ENCODE measurements at regions of chr5 and their contacts with region 1.

Region 1: DNA sequence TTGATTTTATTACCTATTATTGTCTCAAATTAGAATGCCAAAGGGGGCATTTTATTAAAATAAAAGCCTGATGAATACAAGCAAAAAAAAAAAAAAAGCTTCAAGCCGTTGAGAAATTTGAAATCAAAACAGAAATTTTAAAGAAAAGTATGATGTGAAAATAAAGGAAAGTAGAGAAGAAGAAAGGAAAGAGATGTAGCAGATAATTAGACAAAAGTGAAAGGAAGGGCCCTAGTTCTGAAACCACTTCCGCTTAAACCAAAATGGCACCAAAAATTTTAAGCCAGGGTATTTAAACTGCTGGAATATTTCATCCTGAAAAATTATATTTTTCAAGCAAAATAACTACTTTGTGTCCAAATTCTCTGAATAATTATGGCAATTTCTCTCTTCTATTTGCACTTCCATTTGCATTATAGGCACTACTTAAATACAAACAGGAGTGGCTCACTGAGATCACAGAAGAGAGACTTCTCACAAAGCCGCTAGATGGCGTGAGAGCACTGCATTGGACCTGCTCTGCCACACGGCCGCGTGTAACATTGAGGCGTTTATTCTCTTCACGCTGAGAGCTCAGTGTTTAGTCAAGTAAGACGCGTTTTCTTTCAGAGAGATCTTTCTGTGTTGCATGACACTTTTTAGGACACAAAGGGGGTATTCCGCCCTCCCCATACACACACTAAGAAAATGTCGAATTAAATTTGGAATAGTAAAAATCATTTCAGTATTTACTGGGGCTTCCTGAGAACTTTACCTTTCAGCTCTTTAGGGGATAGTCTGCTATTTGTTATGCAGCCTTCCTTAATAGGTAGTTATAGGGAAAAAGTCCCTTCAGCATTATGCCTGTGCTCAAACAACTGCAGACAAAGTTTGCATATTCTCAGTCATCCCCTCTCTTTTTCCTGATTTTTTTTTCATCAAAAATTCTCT is 368.4 kb upstream of the CCNH start:
- DNase-seq: peak; percentile 60
- H3K27ac ChIP-seq: no peak overlapping the region
- CTCF ChIP-seq: peak; percentile 98

Region 2: GRCh38 chr5:87936667-87937066 is 155.6 kb after region 1 on chr5:
- CTCF ChIA-PET with region 1: no interaction called
- POLR2A ChIA-PET with region 1: no interaction called
- DNase-seq: no peak
- H3K27ac ChIP-seq: no peak overlapping the region
- CTCF ChIP-seq: no peak

Region 3: GRCh38 chr5:88690409-88691229 is 909.5 kb after region 1 on chr5:
- CTCF ChIA-PET with region 1: interaction called, 40 read pairs
- POLR2A ChIA-PET with region 1: no interaction called
- DNase-seq: peak; percentile 80
- H3K27ac ChIP-seq: no peak overlapping the region
- CTCF ChIP-seq: peak; percentile 99

Region 4: GRCh38 chr5:88724201-88724600 is 943.1 kb after region 1 on chr5:
- CTCF ChIA-PET with region 1: interaction called, 20 read pairs
- POLR2A ChIA-PET with region 1: no interaction called
- DNase-seq: no peak
- H3K27ac ChIP-seq: no peak overlapping the region
- CTCF ChIP-seq: no peak; the same call in none of the 2 replicates

Region 5: GRCh38 chr5:88729084-88729828 is 948.2 kb after region 1 on chr5:
- CTCF ChIA-PET with region 1: interaction called, 20 read pairs
- POLR2A ChIA-PET with region 1: no interaction called
- DNase-seq: peak; percentile 67
- H3K27ac ChIP-seq: no peak overlapping the region
- CTCF ChIP-seq: peak; percentile 89